ENCODE measurements at regions of chr11 and their contacts with region 1.

Region 1: GRCh38 chr11:93652161-93652597 is 9.3 kb upstream of the CEP295 start:
- DNase-seq: no peak
- ATAC-seq: no peak

Region 2: DNA sequence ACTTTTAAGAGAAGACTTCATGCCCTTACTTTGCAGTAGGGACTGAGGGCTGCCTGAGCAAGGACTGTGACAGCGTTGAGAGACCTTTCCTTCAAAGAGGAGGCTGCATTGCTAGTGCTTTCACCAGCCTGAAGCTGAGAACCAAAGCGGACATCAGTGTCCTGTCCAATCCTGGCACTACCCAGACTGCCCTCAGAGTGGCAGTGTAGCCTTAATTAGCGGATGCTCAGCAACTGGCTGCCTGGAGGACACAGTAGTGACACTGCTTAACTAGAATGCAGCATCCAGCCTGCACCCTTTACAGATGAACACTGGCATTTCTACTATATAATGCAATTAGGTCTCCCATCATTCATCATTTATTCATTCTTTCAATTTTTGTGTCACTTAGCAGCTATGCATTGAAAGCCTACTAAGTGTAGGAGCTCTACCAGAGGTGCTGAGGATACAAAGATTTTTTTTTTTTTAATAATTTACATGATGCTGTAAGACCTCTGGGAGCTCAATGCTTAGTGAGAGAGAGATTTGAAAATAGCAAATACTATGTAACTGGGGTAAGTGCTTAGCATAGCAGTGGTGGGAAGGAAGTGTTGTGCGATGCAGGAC is 417.5 kb before region 1 on chr11:
- intact Hi-C with region 1: loop called (anchors 2 to 5 kb)
- DNase-seq: peak; percentile 77
- ATAC-seq: peak; percentile 97 to 98

Region 3: GRCh38 chr11:93623179-93623578 is 29.0 kb before region 1 on chr11:
- intact Hi-C with region 1: no loop called
- DNase-seq: no peak
- ATAC-seq: no peak